ENCODE measurements at regions of chr5 and their contacts with region 1.

Region 1: DNA sequence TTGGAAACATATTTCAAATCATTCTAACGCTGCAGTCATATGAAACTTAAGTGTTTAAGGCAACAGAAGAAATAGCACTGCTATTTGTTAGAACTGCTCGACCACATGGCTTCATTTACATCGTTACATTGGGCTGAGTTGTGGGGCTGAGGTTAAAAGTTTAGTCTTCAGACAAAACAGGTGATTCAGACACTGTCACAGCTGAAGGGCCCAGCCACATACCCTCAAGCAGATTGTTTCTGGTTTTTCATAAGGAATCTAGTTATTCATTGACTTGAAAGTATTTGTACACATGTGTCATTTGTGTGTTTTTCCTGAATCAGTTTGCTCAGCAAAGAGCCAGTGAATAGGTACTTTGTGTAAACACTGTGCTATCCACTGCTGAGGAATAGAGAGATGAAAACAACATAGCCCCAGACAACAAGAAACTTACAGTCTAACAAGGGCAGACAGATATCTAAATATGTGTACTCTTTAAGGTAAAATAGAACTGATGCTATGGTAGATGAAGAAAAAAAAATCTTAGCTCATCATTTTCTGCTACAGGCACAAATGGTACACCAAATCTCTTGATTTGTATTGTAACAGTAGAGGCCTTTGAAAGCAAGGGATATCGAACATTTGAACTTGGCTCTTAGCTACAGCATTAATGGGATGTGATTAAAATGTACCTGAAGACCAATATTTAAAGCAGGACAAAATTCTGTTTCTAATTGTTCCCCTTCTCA is 357.6 kb upstream of the RPS23 start:
- DNase-seq: peak; percentile 57 to 66
- H3K4me3 ChIP-seq: no peak overlapping the region
- H3K4me3 Mint-ChIP-seq: no peak overlapping the region
- H3K27ac Mint-ChIP-seq: peak overlapping the region; percentile 48
- H3K4me1 ChIP-seq: peaks cover 23% of the 10 kb centered on the region
- H3K4me1 Mint-ChIP-seq: peaks cover 21% of the 10 kb centered on the region
- H3K27me3 ChIP-seq: no peaks in the 10 kb centered on the region
- H3K27me3 Mint-ChIP-seq: no peaks in the 10 kb centered on the region
- CTCF ChIP-seq: no peak

Region 2: GRCh38 chr5:82351754-82352145 is 284.0 kb before region 1 on chr5:
- CTCF ChIA-PET with region 1: no interaction called
- POLR2A ChIA-PET with region 1: no interaction called
- intact Hi-C with region 1: loop called (anchors 2 kb)
- DNase-seq: peak in 1 of 2 experiments; percentile 60
- H3K4me3 ChIP-seq: no peak overlapping the region
- H3K4me3 Mint-ChIP-seq: no peak overlapping the region
- H3K27ac Mint-ChIP-seq: no peak overlapping the region
- H3K4me1 ChIP-seq: no peaks in the 10 kb centered on the region
- H3K4me1 Mint-ChIP-seq: peaks cover 8% of the 10 kb centered on the region
- H3K27me3 ChIP-seq: no peaks in the 10 kb centered on the region
- H3K27me3 Mint-ChIP-seq: no peaks in the 10 kb centered on the region
- CTCF ChIP-seq: peak; percentile 66

Region 3: GRCh38 chr5:82387001-82387818 is 248.5 kb before region 1 on chr5:
- CTCF ChIA-PET with region 1: no interaction called
- POLR2A ChIA-PET with region 1: no interaction called
- intact Hi-C with region 1: loop called (anchors 1 kb)
- DNase-seq: peak; percentile 85 to 88
- H3K4me3 ChIP-seq: no peak overlapping the region
- H3K4me3 Mint-ChIP-seq: peak overlapping the region; percentile 54
- H3K27ac Mint-ChIP-seq: peak overlapping the region; percentile 73
- H3K4me1 ChIP-seq: peaks cover 23% of the 10 kb centered on the region
- H3K4me1 Mint-ChIP-seq: peaks cover 39% of the 10 kb centered on the region
- H3K27me3 ChIP-seq: no peaks in the 10 kb centered on the region
- H3K27me3 Mint-ChIP-seq: no peaks in the 10 kb centered on the region
- CTCF ChIP-seq: no peak

Region 4: GRCh38 chr5:82594097-82594496 is 41.6 kb before region 1 on chr5:
- CTCF ChIA-PET with region 1: no interaction called
- POLR2A ChIA-PET with region 1: interaction called, 5 read pairs
- intact Hi-C with region 1: loop called (anchors 1 kb)
- DNase-seq: peak in 1 of 2 experiments; percentile 30
- H3K4me3 ChIP-seq: no peak overlapping the region
- H3K4me3 Mint-ChIP-seq: no peak overlapping the region
- H3K27ac Mint-ChIP-seq: peak overlapping the region; percentile 73
- H3K4me1 ChIP-seq: peaks cover 26% of the 10 kb centered on the region
- H3K4me1 Mint-ChIP-seq: peaks cover 25% of the 10 kb centered on the region
- H3K27me3 ChIP-seq: no peaks in the 10 kb centered on the region
- H3K27me3 Mint-ChIP-seq: no peaks in the 10 kb centered on the region
- CTCF ChIP-seq: no peak

Region 5: DNA sequence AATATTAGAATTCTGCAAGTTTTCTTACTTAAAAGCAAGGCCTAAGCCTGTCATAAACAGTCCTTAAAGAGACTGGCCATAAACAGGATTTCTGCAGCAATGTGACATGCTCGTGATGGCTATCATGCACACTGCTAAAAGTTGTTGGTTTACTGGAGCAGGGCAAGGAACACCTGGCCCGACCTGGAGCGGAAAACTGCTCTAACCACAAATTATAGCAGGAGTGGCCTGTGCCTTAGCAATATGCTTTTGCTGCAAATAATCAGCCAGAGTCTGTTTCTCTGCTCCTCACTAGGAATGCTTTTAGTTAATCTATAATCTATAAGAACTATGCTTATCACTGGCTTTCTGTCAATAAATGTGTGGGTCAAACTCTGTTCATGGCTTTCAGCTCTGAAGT is 34.6 kb before region 1 on chr5:
- CTCF ChIA-PET with region 1: no interaction called
- POLR2A ChIA-PET with region 1: no interaction called
- intact Hi-C with region 1: loop called (anchors 1 kb)
- DNase-seq: peak; percentile 50 to 71
- H3K4me3 ChIP-seq: no peak overlapping the region
- H3K4me3 Mint-ChIP-seq: peak overlapping the region; percentile 38
- H3K27ac Mint-ChIP-seq: peak overlapping the region; percentile 34
- H3K4me1 ChIP-seq: peaks cover 23% of the 10 kb centered on the region
- H3K4me1 Mint-ChIP-seq: peaks cover 9% of the 10 kb centered on the region
- H3K27me3 ChIP-seq: no peaks in the 10 kb centered on the region
- H3K27me3 Mint-ChIP-seq: no peaks in the 10 kb centered on the region
- CTCF ChIP-seq: no peak

Region 6: DNA sequence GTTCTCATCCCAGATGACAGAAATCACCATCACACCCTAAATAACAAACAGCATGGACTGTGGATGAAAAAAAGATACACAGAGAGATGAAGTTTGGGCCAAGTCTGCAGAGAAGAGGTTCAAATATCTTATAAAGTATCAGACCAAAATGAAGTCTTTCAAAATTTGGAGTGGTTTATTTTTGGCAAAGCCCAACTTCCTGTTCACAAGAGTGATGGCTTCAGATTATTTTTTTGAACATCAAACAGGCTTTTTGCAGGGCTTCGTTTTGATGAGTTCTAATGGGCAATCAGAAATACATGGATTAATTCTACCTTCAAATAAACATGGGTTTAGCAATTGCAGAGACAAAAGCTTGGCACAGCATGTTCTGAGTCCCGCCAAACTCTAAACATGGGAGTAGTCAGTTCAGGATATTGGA is 20.6 kb after region 1 on chr5:
- CTCF ChIA-PET with region 1: no interaction called
- POLR2A ChIA-PET with region 1: no interaction called
- intact Hi-C with region 1: no loop called
- DNase-seq: no peak
- H3K4me3 ChIP-seq: no peak overlapping the region
- H3K4me3 Mint-ChIP-seq: no peak overlapping the region
- H3K27ac Mint-ChIP-seq: no peak overlapping the region
- H3K4me1 ChIP-seq: no peaks in the 10 kb centered on the region
- H3K4me1 Mint-ChIP-seq: no peaks in the 10 kb centered on the region
- H3K27me3 ChIP-seq: no peaks in the 10 kb centered on the region
- H3K27me3 Mint-ChIP-seq: no peaks in the 10 kb centered on the region
- CTCF ChIP-seq: no peak

Region 7: DNA sequence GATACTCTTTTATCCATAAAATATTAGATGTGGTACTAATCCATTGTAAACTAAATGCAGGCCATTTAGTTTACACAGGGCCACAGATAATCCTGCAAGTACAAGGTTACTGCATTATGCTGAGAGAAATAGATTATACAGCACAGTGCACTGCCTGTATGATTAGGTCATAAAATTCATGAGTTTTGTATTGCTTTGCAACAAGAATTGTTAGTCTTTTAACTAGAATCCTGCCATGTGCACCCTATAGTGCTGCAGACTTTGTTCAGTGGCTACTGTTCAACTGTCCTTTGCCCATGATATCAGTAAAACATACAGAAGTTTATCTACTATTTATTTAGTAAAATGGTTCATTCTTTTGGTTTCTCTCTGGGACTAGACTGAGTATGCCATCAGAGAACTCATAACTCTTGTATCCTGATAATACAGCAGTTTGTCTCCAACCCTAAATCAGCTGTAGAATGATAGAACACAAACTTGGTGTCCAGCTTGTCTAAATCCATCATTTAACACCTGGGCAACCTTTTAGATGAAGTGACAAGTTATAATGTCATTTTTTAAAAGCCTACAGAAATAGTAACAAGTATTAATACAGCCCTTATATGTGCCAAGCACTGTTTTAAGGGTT is 150.3 kb after region 1 on chr5:
- CTCF ChIA-PET with region 1: no interaction called
- POLR2A ChIA-PET with region 1: no interaction called
- intact Hi-C with region 1: no loop called
- DNase-seq: peak in 1 of 2 experiments; percentile 24
- H3K4me3 ChIP-seq: no peak overlapping the region
- H3K4me3 Mint-ChIP-seq: no peak overlapping the region
- H3K27ac Mint-ChIP-seq: no peak overlapping the region
- H3K4me1 ChIP-seq: peaks cover 23% of the 10 kb centered on the region
- H3K4me1 Mint-ChIP-seq: no peaks in the 10 kb centered on the region
- H3K27me3 ChIP-seq: no peaks in the 10 kb centered on the region
- H3K27me3 Mint-ChIP-seq: no peaks in the 10 kb centered on the region
- CTCF ChIP-seq: no peak

Region 8: GRCh38 chr5:82942083-82942881 is 306.6 kb after region 1 on chr5:
- CTCF ChIA-PET with region 1: no interaction called
- POLR2A ChIA-PET with region 1: no interaction called
- intact Hi-C with region 1: no loop called
- DNase-seq: no peak
- H3K4me3 ChIP-seq: no peak overlapping the region
- H3K4me3 Mint-ChIP-seq: no peak overlapping the region
- H3K27ac Mint-ChIP-seq: no peak overlapping the region
- H3K4me1 ChIP-seq: no peaks in the 10 kb centered on the region
- H3K4me1 Mint-ChIP-seq: no peaks in the 10 kb centered on the region
- H3K27me3 ChIP-seq: no peaks in the 10 kb centered on the region
- H3K27me3 Mint-ChIP-seq: peaks cover 2% of the 10 kb centered on the region
- CTCF ChIP-seq: no peak

Region 9: GRCh38 chr5:83577036-83577636 is 941.4 kb after region 1 on chr5:
- CTCF ChIA-PET with region 1: no interaction called
- POLR2A ChIA-PET with region 1: no interaction called
- intact Hi-C with region 1: loop called (anchors 1 kb)
- DNase-seq: peak; percentile 82 to 89
- H3K4me3 ChIP-seq: no peak overlapping the region
- H3K4me3 Mint-ChIP-seq: peak overlapping the region; percentile 65
- H3K27ac Mint-ChIP-seq: peak overlapping the region; percentile 68
- H3K4me1 ChIP-seq: peaks cover 16% of the 10 kb centered on the region
- H3K4me1 Mint-ChIP-seq: peaks cover 20% of the 10 kb centered on the region
- H3K27me3 ChIP-seq: no peaks in the 10 kb centered on the region
- H3K27me3 Mint-ChIP-seq: no peaks in the 10 kb centered on the region
- CTCF ChIP-seq: no peak

Measured in Caco-2 (cell line).